Naive thymus-derived CD8-positive, alpha-beta T cell (primary cell): ENCODE measurements at regions of chr10 and their contacts with region 1.

Region 1: GRCh38 chr10:26448706-26449435 is 10.7 kb downstream of the APBB1IP start:
- DNase-seq: peak; percentile 30 to 94 (median 87)
- ATAC-seq: peak; percentile 78 to 88
- H3K4me3 Mint-ChIP-seq: peak overlapping the region; percentile 61 to 90 (median 85)
- H3K27ac Mint-ChIP-seq: peak overlapping the region; percentile 92 to 100 (median 97)
- H3K4me1 Mint-ChIP-seq: peaks cover 56 to 95% (median 89%) of the 10 kb centered on the region in 4 donors
- H3K27me3 Mint-ChIP-seq: peaks cover 0 to 3% (median 0%) of the 10 kb centered on the region in 5 donors

Region 2: GRCh38 chr10:25912866-25913265 is 536.0 kb before region 1 on chr10:
- POLR2A ChIA-PET with region 1: no interaction called
- DNase-seq: no peak
- ATAC-seq: no peak
- H3K4me3 Mint-ChIP-seq: no peak overlapping the region
- H3K27ac Mint-ChIP-seq: no peak overlapping the region
- H3K4me1 Mint-ChIP-seq: no peaks in the 10 kb centered on the region
- H3K27me3 Mint-ChIP-seq: peaks cover 1 to 19% (median 5%) of the 10 kb centered on the region in 5 donors

Region 3: DNA sequence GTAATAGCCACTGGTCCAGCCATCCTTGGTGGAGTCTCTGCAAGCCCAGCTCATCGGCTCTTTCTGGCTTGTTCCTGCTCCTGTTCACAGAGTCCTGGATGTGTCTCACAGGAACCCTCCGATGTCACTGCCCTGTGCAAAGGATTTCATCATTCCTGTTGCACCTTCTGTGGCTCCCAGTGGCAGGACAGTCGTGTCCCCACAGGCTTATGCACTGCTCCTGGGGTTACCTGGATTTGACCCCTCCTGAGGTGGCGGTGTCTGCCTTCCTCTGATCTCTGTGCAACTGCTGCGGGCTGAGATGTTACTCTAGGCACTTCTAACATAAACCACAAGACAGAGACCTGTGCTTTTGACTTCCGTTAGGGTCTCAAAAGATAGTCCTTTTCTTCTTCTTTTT is 19.8 kb after region 1 on chr10:
- POLR2A ChIA-PET with region 1: interaction called, 15 read pairs
- DNase-seq: peak; percentile 22 to 86 (median 72)
- ATAC-seq: peak; percentile 88 to 97
- H3K4me3 Mint-ChIP-seq: peak overlapping the region; percentile 64 to 86 (median 80)
- H3K27ac Mint-ChIP-seq: peak overlapping the region; percentile 70 to 98 (median 91)
- H3K4me1 Mint-ChIP-seq: peaks cover 41 to 97% (median 93%) of the 10 kb centered on the region in 4 donors
- H3K27me3 Mint-ChIP-seq: no peaks in the 10 kb centered on the region

Region 4: GRCh38 chr10:26481914-26482550 is 33.2 kb after region 1 on chr10:
- POLR2A ChIA-PET with region 1: interaction called, 19 read pairs
- DNase-seq: peak in 9 of 10 donors; percentile 37 to 88 (median 73)
- ATAC-seq: peak; percentile 72 to 85
- H3K4me3 Mint-ChIP-seq: peak overlapping the region; percentile 56 to 82 (median 73)
- H3K27ac Mint-ChIP-seq: peak overlapping the region; percentile 67 to 97 (median 94)
- H3K4me1 Mint-ChIP-seq: peaks cover 35 to 85% (median 75%) of the 10 kb centered on the region in 4 donors
- H3K27me3 Mint-ChIP-seq: no peaks in the 10 kb centered on the region